Esophagus muscularis mucosa (tissue), 4 donors: ENCODE measurements at regions of chr9 and their contacts with region 1.

Region 1: GRCh38 chr9:70160686-70161600 is 97.8 kb upstream of the SMC5 start:
- DNase-seq: no peak
- H3K4me3 ChIP-seq: no peak overlapping the region
- H3K27ac ChIP-seq: peak overlapping the region; percentile 41 to 76 (median 58)
- H3K4me1 ChIP-seq: peaks cover 7 to 73% (median 65%) of the 10 kb centered on the region in 4 donors
- H3K27me3 ChIP-seq: no peaks in the 10 kb centered on the region
- CTCF ChIP-seq: no peak
- EP300 ChIP-seq: no peak
- POLR2A ChIP-seq: no peak

Region 2: GRCh38 chr9:70120834-70121510 is 40.0 kb before region 1 on chr9:
- intact Hi-C with region 1: no loop called
- DNase-seq: peak; percentile 94
- H3K4me3 ChIP-seq: no peak overlapping the region
- H3K27ac ChIP-seq: peak overlapping the region; percentile 51 to 65 (median 60)
- H3K4me1 ChIP-seq: peaks cover 4 to 55% (median 28%) of the 10 kb centered on the region in 4 donors
- H3K27me3 ChIP-seq: no peaks in the 10 kb centered on the region
- CTCF ChIP-seq: peak; percentile 23 to 34 (median 33)
- EP300 ChIP-seq: no peak
- POLR2A ChIP-seq: no peak

Region 3: DNA sequence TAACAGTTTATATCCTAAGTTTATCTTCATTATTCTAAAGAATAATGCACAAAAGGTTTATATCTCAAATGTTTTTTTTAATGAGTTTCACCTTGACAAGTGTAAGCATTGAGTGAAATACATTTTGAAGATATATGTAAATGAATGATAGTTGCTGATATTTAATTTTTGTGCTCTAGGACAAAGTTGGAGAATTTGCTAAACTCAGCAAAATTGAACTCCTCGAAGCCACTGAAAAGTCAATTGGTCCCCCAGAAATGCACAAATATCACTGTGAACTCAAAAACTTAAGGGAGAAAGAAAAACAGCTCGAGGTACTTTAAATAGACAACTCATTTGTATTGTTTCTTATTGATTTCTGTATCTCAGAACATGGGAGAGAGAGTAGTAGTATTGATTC is 117.4 kb after region 1 on chr9:
- intact Hi-C with region 1: loop called (anchors 10 kb)
- DNase-seq: no peak
- H3K4me3 ChIP-seq: no peak overlapping the region
- H3K27ac ChIP-seq: no peak overlapping the region
- H3K4me1 ChIP-seq: peaks cover 0 to 4% (median 0%) of the 10 kb centered on the region in 4 donors
- H3K27me3 ChIP-seq: no peaks in the 10 kb centered on the region
- CTCF ChIP-seq: no peak
- EP300 ChIP-seq: no peak
- POLR2A ChIP-seq: no peak

Region 4: DNA sequence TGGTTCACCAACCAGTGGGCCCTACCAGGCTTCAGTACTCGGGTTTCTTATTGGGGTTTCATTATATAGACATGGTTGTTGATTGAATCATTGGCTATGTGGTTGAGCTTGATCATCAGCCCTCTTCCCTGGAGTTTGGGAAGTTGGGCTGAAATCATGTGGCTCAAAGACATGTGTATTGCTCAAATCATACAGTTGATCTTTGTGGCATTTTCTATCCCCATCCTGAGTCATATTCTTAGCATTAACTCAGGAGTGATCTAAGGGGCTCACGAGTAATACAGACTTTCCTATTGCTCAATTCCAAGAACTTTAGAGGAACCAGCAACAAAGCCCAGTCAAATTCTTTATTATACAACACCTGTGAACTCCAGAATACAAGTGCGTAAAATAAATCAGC is 164.0 kb after region 1 on chr9:
- intact Hi-C with region 1: no loop called
- DNase-seq: no peak
- H3K4me3 ChIP-seq: no peak overlapping the region
- H3K27ac ChIP-seq: no peak overlapping the region
- H3K4me1 ChIP-seq: peaks cover 0 to 4% (median 0%) of the 10 kb centered on the region in 4 donors
- H3K27me3 ChIP-seq: no peaks in the 10 kb centered on the region
- CTCF ChIP-seq: no peak
- EP300 ChIP-seq: no peak
- POLR2A ChIP-seq: no peak

Region 5: GRCh38 chr9:70406434-70406862 is 245.5 kb after region 1 on chr9:
- intact Hi-C with region 1: loop called (anchors 10 kb)
- DNase-seq: no peak
- H3K4me3 ChIP-seq: peak overlapping the region; percentile 18 to 49 (median 36)
- H3K27ac ChIP-seq: peak overlapping the region; percentile 62 to 81 (median 73)
- H3K4me1 ChIP-seq: peaks cover 77 to 87% (median 82%) of the 10 kb centered on the region in 4 donors
- H3K27me3 ChIP-seq: no peaks in the 10 kb centered on the region
- CTCF ChIP-seq: no peak
- EP300 ChIP-seq: no peak
- POLR2A ChIP-seq: no peak